Activated CD8-positive, alpha-beta T cell treated with anti-CD3 and anti-CD28 coated beads for 36 hours (primary cell): ENCODE measurements at regions of chr1 and their contacts with region 1.

Region 1: DNA sequence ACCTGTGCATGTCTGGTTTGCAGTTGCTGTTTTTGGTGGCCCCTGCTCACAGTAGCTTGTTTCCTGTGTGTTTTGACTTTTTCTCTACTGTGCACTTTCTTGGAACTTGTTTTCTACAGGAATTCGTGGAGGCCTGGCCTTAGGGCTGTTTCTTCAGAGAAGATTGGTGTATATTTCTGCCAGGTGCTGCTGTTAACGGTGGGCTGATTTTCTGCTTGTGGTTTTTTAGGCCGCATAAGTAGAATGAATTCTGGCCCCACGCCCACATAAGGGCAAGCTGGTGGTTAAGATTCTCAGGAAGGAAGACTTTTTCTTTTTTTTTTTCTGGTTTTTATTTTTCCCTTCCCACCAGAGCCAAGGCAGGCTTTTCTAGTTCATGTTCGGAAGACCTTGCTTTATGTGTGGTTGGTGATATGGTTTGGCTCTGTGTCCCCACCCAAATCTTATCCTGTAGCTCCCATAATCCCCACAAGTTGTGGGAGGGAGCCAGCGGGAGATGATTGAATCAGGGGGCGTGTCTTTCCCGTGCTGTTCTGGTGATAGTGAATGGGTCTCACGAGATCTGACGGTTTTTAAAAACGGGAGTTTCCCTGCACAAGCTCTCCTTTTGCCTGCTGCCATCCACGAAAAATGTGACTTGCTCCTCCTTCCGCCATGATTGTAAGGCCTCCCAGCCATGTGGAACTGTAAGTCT is 71.5 kb upstream of the DISP3 start:
- DNase-seq: peak; percentile 90
- ATAC-seq: peak; percentile 91
- H3K4me3 Mint-ChIP-seq: peak overlapping the region; percentile 5
- H3K27ac Mint-ChIP-seq: peak overlapping the region; percentile 56
- H3K4me1 Mint-ChIP-seq: peaks cover 41% of the 10 kb centered on the region
- H3K27me3 Mint-ChIP-seq: peaks cover 7% of the 10 kb centered on the region
- CTCF ChIP-seq: no peak

Region 2: GRCh38 chr1:11364170-11364569 is 43.3 kb before region 1 on chr1:
- CTCF ChIA-PET with region 1: interaction called, 10 read pairs
- POLR2A ChIA-PET with region 1: no interaction called
- intact Hi-C with region 1: no loop called
- DNase-seq: peak; percentile 18
- ATAC-seq: peak; percentile 53
- H3K4me3 Mint-ChIP-seq: no peak overlapping the region
- H3K27ac Mint-ChIP-seq: no peak overlapping the region
- H3K4me1 Mint-ChIP-seq: no peaks in the 10 kb centered on the region
- H3K27me3 Mint-ChIP-seq: no peaks in the 10 kb centered on the region
- CTCF ChIP-seq: peak; percentile 50

Region 3: DNA sequence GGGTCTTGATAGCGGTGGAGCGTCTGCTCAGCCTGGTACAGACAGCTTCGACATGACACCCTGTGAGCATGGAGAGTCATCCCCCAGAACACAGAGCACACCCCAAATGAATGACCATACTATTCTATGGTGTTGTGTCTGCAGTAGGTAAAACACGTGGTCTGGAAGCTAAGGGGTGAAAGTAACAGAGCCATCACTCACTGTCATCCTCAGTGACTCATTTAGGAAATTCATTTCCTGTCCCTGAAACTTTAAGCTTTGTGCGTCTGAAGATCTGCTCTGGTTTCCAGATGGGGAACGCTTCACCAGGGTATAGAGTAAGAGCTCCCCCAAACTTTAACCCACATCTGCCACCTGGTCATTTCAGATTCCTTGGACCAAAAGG is 23.3 kb before region 1 on chr1:
- CTCF ChIA-PET with region 1: interaction called, 3 read pairs
- POLR2A ChIA-PET with region 1: interaction called, 6 read pairs
- intact Hi-C with region 1: loop called (anchors 1 kb)
- DNase-seq: peak; percentile 33
- ATAC-seq: peak; percentile 92
- H3K4me3 Mint-ChIP-seq: no peak overlapping the region
- H3K27ac Mint-ChIP-seq: peak overlapping the region; percentile 69
- H3K4me1 Mint-ChIP-seq: peaks cover 19% of the 10 kb centered on the region
- H3K27me3 Mint-ChIP-seq: peaks cover 3% of the 10 kb centered on the region
- CTCF ChIP-seq: no peak